PC-9 (cell line): ENCODE measurements at regions of chr1 and their contacts with region 1.

Region 1: DNA sequence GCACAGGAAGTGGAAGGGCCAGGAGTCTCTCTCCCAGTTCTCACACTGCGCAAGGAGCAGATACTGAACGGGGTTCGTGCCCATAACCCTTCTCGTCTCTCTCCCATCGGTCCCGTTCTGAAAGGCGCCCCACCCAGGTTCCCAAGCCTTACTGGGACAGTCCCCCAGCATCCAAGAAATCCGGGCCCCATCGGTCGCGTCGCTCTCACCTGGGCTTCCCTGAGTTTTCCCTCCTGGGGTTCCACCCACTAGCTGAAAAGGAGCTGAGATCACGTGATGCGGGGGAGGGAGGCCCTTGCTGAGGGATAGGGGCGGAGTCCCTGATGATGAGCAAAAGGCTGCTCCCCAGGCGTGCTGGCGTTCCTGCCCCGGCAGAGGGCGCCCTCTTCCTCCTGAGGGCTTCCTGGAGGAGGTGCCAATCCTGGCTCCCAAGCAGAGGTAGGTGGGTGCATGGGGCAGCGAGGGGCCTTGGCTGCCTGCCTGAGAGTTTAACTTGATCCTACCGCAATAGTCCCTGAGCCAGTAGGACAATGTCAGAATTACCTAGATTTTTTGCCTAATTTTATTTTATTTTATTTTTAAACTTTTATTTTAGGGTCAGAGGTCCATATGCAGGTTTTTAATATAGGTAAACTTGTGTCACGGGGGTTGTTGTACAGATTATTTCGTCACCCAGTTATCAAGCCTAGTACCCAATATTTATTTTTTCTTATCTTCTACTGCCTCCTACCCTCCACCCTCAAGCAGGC is at the start of gene SPOCD1:
- DNase-seq: peak; percentile 88 to 91
- H3K4me3 ChIP-seq: peak within 1 kb of the TSS; percentile 44; the same call in 1 of the 2 replicates
- H3K27ac ChIP-seq: no peak within 1 kb of the TSS
- H3K4me1 ChIP-seq: peaks cover 5% of the 10 kb centered on the region
- H3K27me3 ChIP-seq: no peaks in the 10 kb centered on the region
- CTCF ChIP-seq: peak; percentile 100
- total RNA-seq, gene SPOCD1: 10.2 and 14.6 TPM in 2 replicates

Region 2: DNA sequence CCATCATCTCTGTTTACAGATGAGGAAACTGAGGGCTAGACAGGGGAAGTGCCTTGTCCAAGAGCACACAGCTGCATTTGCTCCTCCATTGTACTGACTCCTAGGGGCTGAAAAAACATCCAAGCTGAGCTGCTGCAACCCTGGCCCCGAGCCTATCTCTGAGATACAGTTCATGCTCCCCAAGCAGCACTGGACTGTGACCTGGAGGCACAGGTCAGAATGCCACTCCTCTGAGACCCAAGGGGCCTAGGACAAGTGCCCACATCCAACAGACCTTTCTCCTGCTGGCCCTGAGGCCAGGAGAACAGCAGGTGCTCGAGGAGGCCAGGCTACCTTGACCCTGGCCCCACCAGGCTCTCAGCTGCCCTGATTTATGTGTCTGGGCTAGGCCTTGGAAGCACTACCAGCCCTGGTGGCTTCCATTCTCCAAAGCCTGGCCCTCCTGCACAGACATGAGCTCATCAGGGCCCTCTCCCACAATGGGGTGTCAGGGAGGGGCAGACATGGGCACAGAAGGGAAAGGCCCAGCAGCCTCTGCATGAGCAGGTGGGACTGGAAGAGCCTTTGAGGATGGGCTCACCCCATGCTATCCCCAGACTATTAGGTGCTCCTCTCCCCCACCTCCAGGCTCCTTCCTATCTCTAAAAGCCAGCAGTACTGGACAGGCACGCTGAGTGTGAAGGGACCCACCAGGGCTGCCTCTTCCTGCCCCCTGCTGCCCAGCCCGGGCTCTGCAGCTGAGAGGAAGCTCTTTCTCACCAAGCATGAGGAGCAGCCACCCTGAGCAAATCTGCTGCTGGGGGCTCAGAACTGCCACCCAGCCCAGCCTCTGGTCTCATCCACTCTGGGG is 70.6 kb before region 1 on chr1:
- CTCF ChIA-PET with region 1: no interaction called
- POLR2A ChIA-PET with region 1: no interaction called
- intact Hi-C with region 1: no loop called
- DNase-seq: peak; percentile 61 to 68
- H3K4me3 ChIP-seq: no peak overlapping the region
- H3K27ac ChIP-seq: no peak overlapping the region
- H3K4me1 ChIP-seq: no peaks in the 10 kb centered on the region
- H3K27me3 ChIP-seq: no peaks in the 10 kb centered on the region
- CTCF ChIP-seq: peak; percentile 98

Region 3: GRCh38 chr1:31938174-31938950 is 122.4 kb after region 1 on chr1 and contains the start of gene PTP4A2:
- CTCF ChIA-PET with region 1: interaction called, 4 read pairs
- POLR2A ChIA-PET with region 1: no interaction called
- intact Hi-C with region 1: loop called (anchors 10 kb)
- DNase-seq: peak; percentile 96 to 97
- H3K4me3 ChIP-seq: peak within 1 kb of the TSS; percentile 86
- H3K27ac ChIP-seq: peak within 1 kb of the TSS; percentile 95
- H3K4me1 ChIP-seq: peaks cover 78% of the 10 kb centered on the region
- H3K27me3 ChIP-seq: no peaks in the 10 kb centered on the region
- CTCF ChIP-seq: no peak; the same call in 1 of the 2 replicates
- total RNA-seq, gene PTP4A2: 149 and 201 TPM in 2 replicates